ENCODE measurements at regions of chr3 and their contacts with region 1.

Region 1: GRCh38 chr3:130892759-130893375 is 1.0 kb upstream of the ATP2C1 start:
- DNase-seq: peak; percentile 71 to 86 (median 79)
- ATAC-seq: peak; percentile 65
- H3K4me3 ChIP-seq: peak overlapping the region; percentile 84 to 90
- H3K27ac ChIP-seq: peak overlapping the region; percentile 90 to 99 (median 96)
- H3K4me1 ChIP-seq: peaks cover 4% of the 10 kb centered on the region
- H3K27me3 ChIP-seq: no peaks in the 10 kb centered on the region
- CTCF ChIP-seq: peak; percentile 66 to 95 (median 87)
- POLR2A ChIP-seq: no peak

Region 2: GRCh38 chr3:130759699-130760338 is 133.0 kb before region 1 on chr3:
- intact Hi-C with region 1: loop called (anchors 5 kb)
- DNase-seq: peak; percentile 55 to 65 (median 59)
- ATAC-seq: peak; percentile 74
- H3K4me3 ChIP-seq: no peak overlapping the region
- H3K27ac ChIP-seq: no peak overlapping the region
- H3K4me1 ChIP-seq: no peaks in the 10 kb centered on the region
- H3K27me3 ChIP-seq: no peaks in the 10 kb centered on the region
- CTCF ChIP-seq: peak; percentile 57 to 93 (median 81)
- POLR2A ChIP-seq: no peak

Region 3: GRCh38 chr3:131242201-131242600 is 349.3 kb after region 1 on chr3:
- intact Hi-C with region 1: no loop called
- DNase-seq: no peak
- ATAC-seq: no peak
- H3K4me3 ChIP-seq: no peak overlapping the region
- H3K27ac ChIP-seq: no peak overlapping the region
- H3K4me1 ChIP-seq: no peaks in the 10 kb centered on the region
- H3K27me3 ChIP-seq: no peaks in the 10 kb centered on the region
- CTCF ChIP-seq: no peak
- POLR2A ChIP-seq: no peak

Measured in body of pancreas (tissue), 4 donors.